GM13977 (cell line): ENCODE measurements at regions of chr2 and their contacts with region 1.

Region 1: DNA sequence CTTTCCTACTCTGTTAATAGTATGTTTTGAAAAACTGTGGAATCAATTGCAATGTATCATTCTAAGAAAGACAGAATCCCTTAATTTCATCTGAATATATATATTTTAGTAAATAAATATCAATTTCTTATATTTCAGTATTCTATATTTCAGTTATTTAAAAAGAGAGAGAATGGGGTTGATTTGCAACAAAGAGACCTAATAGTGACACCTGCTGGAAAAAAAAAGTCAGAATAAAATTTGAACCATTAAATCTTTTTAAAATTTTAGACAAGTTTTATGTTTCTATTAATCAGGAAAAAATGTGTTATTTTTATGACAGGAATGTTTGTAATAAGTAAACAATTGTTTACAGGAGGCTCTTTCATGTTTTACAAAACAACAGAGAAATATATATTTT is 20.7 kb upstream of the CCNT2 start:
- DNase-seq: no peak
- CTCF ChIP-seq: peak; percentile 30

Region 2: GRCh38 chr2:134469516-134470115 is 428.3 kb before region 1 on chr2:
- in situ Hi-C with region 1: loop called (anchors 10 kb)
- DNase-seq: no peak
- CTCF ChIP-seq: no peak

Region 3: DNA sequence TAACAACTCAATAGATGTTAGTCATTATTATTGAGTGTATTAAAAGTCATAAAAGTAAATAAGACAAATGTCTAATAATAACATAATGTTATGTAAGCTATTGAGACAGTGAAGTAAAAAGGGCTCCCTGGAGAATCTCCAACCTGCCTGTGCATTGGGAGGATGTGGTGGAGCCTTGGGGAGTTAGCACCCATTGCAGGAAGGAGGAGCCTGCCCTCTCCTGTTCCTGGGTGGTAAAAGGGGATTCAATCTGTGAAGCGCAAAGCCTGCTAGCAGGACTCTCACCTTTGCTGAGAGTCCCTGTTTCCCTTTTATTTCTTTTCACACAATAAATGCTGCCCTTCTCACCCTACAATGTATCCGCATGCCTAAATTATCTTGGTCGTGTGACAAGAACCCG is 360.3 kb after region 1 on chr2:
- in situ Hi-C with region 1: no loop called
- DNase-seq: no peak
- CTCF ChIP-seq: no peak